AG04450 (cell line): ENCODE measurements at regions of chr3 and their contacts with region 1.

Region 1: GRCh38 chr3:52159503-52159902 is 5.3 kb upstream of the POC1A start:
- DNase-seq: no peak
- H3K4me3 ChIP-seq: no peak overlapping the region
- H3K27ac ChIP-seq: no peak overlapping the region
- H3K27me3 ChIP-seq: no peaks in the 10 kb centered on the region
- CTCF ChIP-seq: no peak

Region 2: GRCh38 chr3:51216291-51216690 is 943.2 kb before region 1 on chr3:
- CTCF ChIA-PET with region 1: no interaction called
- POLR2A ChIA-PET with region 1: no interaction called
- DNase-seq: no peak
- H3K4me3 ChIP-seq: no peak overlapping the region
- H3K27ac ChIP-seq: no peak overlapping the region
- H3K27me3 ChIP-seq: no peaks in the 10 kb centered on the region
- CTCF ChIP-seq: no peak

Region 3: DNA sequence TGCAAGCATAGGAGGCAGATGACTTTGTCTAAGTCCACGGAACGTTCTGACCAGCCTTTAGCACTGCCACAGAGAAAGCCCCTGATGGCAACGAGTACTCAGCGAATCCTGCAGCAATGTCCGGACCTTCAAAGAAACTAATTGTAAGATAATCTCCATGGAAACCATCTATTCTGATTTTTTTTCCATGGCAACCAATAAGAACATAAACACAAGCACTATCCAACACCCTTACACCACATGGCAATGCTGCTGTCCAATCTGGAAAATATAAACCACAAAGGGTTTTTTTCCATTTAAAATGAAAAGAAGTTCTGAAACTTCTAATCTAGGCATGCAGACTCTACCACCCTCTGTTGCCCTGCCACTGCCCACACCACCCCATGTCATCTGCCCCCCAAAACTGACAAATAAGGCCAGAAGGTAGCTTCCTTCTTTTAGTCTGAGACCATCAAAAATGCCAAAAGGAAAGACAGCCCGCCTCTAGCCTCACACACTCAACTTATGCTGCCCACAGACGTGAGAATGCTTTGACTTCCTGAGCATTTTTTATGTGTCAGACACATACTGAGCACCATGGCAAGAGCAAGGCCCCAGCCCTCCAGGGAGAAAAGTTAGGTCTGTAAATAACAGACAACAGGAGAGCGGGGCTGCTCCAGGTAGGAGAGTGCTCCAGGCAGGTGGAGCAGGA is 49.7 kb before region 1 on chr3:
- CTCF ChIA-PET with region 1: no interaction called
- POLR2A ChIA-PET with region 1: no interaction called
- DNase-seq: no peak
- H3K4me3 ChIP-seq: no peak overlapping the region
- H3K27ac ChIP-seq: no peak overlapping the region
- H3K27me3 ChIP-seq: no peaks in the 10 kb centered on the region
- CTCF ChIP-seq: no peak

Region 4: GRCh38 chr3:52299879-52300611 is 140.5 kb after region 1 on chr3:
- CTCF ChIA-PET with region 1: no interaction called
- POLR2A ChIA-PET with region 1: interaction called, 10 read pairs
- DNase-seq: no peak
- H3K4me3 ChIP-seq: no peak overlapping the region
- H3K27ac ChIP-seq: no peak overlapping the region
- H3K27me3 ChIP-seq: peaks cover 3% of the 10 kb centered on the region
- CTCF ChIP-seq: 0 out of 2 replicates have a peak, but pooled peaks have one; percentile 14